ENCODE measurements at regions of chr7 and their contacts with region 1.

Region 1: GRCh38 chr7:36291387-36292316 is 98.0 kb upstream of the ANLN start:
- DNase-seq: peak; percentile 80
- H3K4me3 Mint-ChIP-seq: peak overlapping the region; percentile 64
- H3K27ac Mint-ChIP-seq: no peak overlapping the region
- H3K4me1 Mint-ChIP-seq: peaks cover 39% of the 10 kb centered on the region
- H3K27me3 Mint-ChIP-seq: no peaks in the 10 kb centered on the region

Region 2: DNA sequence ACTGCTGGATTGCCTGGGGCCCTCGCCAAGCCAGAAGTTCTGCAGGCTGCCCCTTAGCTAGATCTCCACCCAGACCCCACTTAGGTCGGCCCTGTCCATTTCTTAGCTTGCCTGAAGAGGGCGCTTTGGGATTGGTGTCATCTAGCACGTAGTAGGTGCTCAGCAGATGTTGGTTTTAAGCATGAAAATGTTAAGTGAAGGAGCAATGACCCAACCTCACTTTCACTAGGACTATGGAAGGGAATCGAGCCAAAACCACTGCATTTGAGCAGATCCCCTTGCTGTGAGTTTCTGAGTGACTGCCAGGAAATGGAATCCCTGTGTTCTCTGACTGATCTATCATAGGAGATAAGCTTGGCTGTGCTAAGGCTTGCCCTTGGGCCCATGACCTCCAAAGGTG is 270.3 kb before region 1 on chr7:
- CTCF ChIA-PET with region 1: interaction called, 12 read pairs
- POLR2A ChIA-PET with region 1: no interaction called
- intact Hi-C with region 1: loop called (anchors 1 kb)
- DNase-seq: peak; percentile 33
- H3K4me3 Mint-ChIP-seq: no peak overlapping the region
- H3K27ac Mint-ChIP-seq: no peak overlapping the region
- H3K4me1 Mint-ChIP-seq: no peaks in the 10 kb centered on the region
- H3K27me3 Mint-ChIP-seq: no peaks in the 10 kb centered on the region

Region 3: DNA sequence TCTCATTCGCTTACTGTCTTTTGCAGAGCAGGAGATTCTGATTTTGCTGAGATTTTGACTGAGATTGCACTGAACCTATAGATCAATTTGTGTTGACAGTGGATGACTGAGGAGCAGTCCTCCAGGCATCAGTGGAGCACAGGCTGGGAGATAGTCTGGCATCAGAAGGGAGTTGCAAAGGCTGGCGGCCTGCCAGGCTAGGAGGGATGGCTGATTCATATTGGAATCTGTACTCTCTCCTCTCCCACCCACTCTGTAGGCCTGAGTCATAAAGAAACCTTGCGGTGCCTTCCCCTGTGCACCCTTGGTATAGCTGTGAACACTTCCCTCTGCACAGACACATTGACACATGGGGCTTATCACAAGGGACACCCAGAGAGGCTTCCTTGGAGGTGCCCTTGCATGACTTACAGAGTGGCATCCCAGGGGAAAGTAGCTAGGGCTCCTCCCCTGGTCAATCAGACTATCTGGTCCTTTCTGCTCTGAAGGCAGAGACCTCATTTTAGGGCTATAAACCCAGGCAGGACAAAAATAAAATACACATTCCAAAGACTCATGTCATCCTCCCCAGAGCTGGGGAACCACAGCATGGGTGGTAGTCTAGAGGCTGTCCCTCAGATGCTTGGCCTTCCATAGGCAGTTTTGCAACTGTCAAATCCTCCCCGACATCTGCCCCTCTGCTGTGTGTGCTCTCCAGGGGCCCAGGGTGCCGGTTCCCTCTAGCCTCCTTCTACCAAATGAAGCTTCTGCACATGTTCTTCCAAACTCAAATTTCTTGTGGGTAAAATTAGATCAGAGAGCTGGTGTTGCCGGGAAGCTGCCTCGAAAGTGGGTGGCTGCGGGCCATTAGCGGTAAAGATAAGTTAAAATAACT is 176.0 kb before region 1 on chr7:
- CTCF ChIA-PET with region 1: interaction called, 5 read pairs
- POLR2A ChIA-PET with region 1: interaction called, 3 read pairs
- intact Hi-C with region 1: loop called (anchors 1 kb)
- DNase-seq: peak; percentile 95
- H3K4me3 Mint-ChIP-seq: no peak overlapping the region
- H3K27ac Mint-ChIP-seq: peak overlapping the region; percentile 31
- H3K4me1 Mint-ChIP-seq: peaks cover 36% of the 10 kb centered on the region
- H3K27me3 Mint-ChIP-seq: peaks cover 18% of the 10 kb centered on the region

Region 4: DNA sequence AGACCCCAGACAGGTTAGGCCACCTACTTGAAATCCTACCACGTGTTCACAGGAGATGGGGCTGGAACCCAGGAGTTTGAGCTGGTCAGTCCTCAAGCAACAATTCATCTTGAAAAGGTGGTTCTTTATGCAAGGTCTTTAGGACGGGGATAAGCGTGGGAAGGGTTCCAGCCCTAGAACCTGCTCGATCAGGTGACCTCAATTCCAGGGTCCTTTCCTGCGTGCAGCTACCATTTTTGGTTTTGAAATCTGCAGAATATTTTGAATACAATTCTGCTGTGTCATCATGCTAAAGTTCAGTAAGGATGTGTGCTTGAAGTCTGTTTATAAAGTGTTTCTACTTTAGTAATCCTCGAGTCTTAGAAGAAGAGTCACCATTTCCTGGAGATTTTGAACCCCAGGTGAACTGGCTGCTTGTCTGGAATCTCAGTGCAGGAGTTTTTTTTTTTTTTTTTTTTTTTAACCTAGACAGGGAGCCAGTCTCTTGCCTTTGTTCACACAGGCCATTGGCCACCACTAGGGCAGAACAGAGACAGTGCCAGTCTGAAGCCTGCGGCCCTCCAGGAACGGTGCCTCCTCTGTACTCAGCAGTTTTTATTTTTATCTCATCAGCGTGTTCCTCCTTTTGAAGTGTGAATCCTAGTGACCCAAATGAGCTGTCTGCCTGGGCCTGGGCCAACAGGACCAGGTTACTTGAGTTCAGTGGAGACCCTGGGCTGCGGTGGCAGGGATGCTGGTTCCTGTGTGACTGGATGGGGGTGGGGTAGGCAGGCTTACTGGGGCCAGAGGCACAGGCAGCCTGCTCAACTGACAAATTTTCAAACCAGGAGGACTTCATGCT is 84.0 kb before region 1 on chr7:
- CTCF ChIA-PET with region 1: interaction called, 3 read pairs
- POLR2A ChIA-PET with region 1: no interaction called
- intact Hi-C with region 1: loop called (anchors 5 kb)
- DNase-seq: peak; percentile 47
- H3K4me3 Mint-ChIP-seq: no peak overlapping the region
- H3K27ac Mint-ChIP-seq: peak overlapping the region; percentile 42
- H3K4me1 Mint-ChIP-seq: peaks cover 45% of the 10 kb centered on the region
- H3K27me3 Mint-ChIP-seq: no peaks in the 10 kb centered on the region

Region 5: DNA sequence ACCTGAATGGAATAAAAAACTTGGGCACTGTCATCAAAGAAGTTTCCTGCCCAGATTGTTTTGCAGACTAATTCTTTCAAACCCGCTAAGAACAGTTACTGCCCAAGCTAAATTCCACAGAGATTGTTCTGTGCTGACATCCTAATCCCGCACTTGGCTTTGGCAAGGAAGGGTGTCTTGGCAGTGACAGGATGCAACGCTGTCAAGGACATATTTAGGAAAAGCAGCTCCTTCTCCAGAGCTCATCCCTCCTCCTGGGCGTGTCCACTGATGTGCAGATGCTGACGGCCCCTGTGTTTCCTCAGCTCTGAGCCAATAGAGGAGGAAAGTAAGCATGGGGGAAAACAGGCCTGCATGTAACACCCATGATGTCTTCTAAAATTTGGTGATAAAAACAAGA is 64.4 kb before region 1 on chr7:
- CTCF ChIA-PET with region 1: no interaction called
- POLR2A ChIA-PET with region 1: no interaction called
- intact Hi-C with region 1: no loop called
- DNase-seq: no peak
- H3K4me3 Mint-ChIP-seq: no peak overlapping the region
- H3K27ac Mint-ChIP-seq: no peak overlapping the region
- H3K4me1 Mint-ChIP-seq: no peaks in the 10 kb centered on the region
- H3K27me3 Mint-ChIP-seq: no peaks in the 10 kb centered on the region

Region 6: GRCh38 chr7:36303202-36304098 is 11.8 kb after region 1 on chr7:
- CTCF ChIA-PET with region 1: interaction called, 17 read pairs
- POLR2A ChIA-PET with region 1: no interaction called
- intact Hi-C with region 1: no loop called
- DNase-seq: no peak
- H3K4me3 Mint-ChIP-seq: no peak overlapping the region
- H3K27ac Mint-ChIP-seq: no peak overlapping the region
- H3K4me1 Mint-ChIP-seq: no peaks in the 10 kb centered on the region
- H3K27me3 Mint-ChIP-seq: no peaks in the 10 kb centered on the region

Region 7: GRCh38 chr7:36315309-36316133 is 23.9 kb after region 1 on chr7:
- CTCF ChIA-PET with region 1: interaction called, 48 read pairs
- POLR2A ChIA-PET with region 1: no interaction called
- intact Hi-C with region 1: no loop called
- DNase-seq: no peak
- H3K4me3 Mint-ChIP-seq: no peak overlapping the region
- H3K27ac Mint-ChIP-seq: no peak overlapping the region
- H3K4me1 Mint-ChIP-seq: no peaks in the 10 kb centered on the region
- H3K27me3 Mint-ChIP-seq: no peaks in the 10 kb centered on the region

Region 8: GRCh38 chr7:37977243-37977642 is 1685.6 kb after region 1 on chr7:
- CTCF ChIA-PET with region 1: no interaction called
- POLR2A ChIA-PET with region 1: no interaction called
- intact Hi-C with region 1: no loop called
- DNase-seq: no peak
- H3K4me3 Mint-ChIP-seq: no peak overlapping the region
- H3K27ac Mint-ChIP-seq: no peak overlapping the region
- H3K4me1 Mint-ChIP-seq: no peaks in the 10 kb centered on the region
- H3K27me3 Mint-ChIP-seq: peaks cover 5% of the 10 kb centered on the region

Measured in activated CD4-positive, alpha-beta memory T cell treated with anti-CD3 and anti-CD28 coated beads for 36 hours (primary cell).